ENCODE measurements at regions of chr13 and their contacts with region 1.

Region 1: GRCh38 chr13:75333103-75333502 is 148.9 kb downstream of the TBC1D4 start:
- DNase-seq: no peak
- ATAC-seq: no peak
- H3K4me3 ChIP-seq: no peak overlapping the region
- H3K4me3 Mint-ChIP-seq: no peak overlapping the region
- H3K27ac ChIP-seq: no peak overlapping the region
- H3K27ac Mint-ChIP-seq: no peak overlapping the region
- H3K4me1 ChIP-seq: no peaks in the 10 kb centered on the region
- H3K4me1 Mint-ChIP-seq: peaks cover 0 to 11% (median 4%) of the 10 kb centered on the region in 7 donors
- H3K27me3 ChIP-seq: no peaks in the 10 kb centered on the region
- H3K27me3 Mint-ChIP-seq: no peaks in the 10 kb centered on the region

Region 2: DNA sequence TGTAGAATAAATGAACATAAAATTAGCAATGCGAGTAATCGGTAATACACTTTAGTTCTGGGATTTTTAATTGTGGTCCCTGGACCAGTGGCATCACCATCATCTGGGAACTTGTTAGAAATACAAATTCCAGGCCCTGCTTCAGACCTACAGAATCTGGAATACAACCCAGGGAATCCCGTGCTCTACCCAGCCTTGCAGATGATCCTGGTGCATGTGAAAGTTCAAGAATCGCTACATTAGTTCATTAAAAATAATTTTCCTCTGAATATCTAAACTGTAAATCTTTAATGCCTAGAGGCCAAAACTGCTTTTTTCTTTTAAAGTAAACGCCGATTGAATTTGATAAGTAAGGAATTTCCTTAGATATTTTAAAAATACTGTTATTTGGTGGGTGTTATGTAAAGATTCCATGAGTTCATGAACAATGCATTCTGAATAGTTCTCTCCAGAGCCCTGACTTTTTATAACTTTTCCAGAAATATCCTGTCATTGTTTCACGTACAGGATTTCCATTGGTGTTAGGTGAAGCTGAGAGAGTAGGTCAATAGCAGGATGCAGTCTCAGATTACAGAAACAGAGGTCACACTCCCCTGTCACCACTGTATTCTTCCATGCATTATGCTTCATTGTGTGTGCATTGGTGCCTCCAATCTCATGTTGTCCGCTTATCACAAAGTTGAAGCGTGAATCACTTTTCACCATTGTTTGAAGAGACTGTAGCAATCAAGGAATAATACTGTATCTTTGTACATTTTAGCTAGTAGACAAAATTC is 602.4 kb before region 1 on chr13:
- CTCF ChIA-PET with region 1: no interaction called
- POLR2A ChIA-PET with region 1: no interaction called
- intact Hi-C with region 1: no loop called
- DNase-seq: no peak
- ATAC-seq: no peak
- H3K4me3 ChIP-seq: no peak overlapping the region
- H3K4me3 Mint-ChIP-seq: no peak overlapping the region
- H3K27ac ChIP-seq: no peak overlapping the region
- H3K27ac Mint-ChIP-seq: no peak overlapping the region
- H3K4me1 ChIP-seq: no peaks in the 10 kb centered on the region
- H3K4me1 Mint-ChIP-seq: peaks cover 0 to 5% (median 0%) of the 10 kb centered on the region in 7 donors
- H3K27me3 ChIP-seq: no peaks in the 10 kb centered on the region
- H3K27me3 Mint-ChIP-seq: peaks cover 0 to 15% (median 0%) of the 10 kb centered on the region in 5 donors

Region 3: GRCh38 chr13:75347925-75348324 is 14.8 kb after region 1 on chr13:
- CTCF ChIA-PET with region 1: no interaction called
- POLR2A ChIA-PET with region 1: no interaction called
- intact Hi-C with region 1: loop called in 1 of 2 experiments (anchors 2 kb)
- DNase-seq: no peak
- ATAC-seq: no peak
- H3K4me3 ChIP-seq: no peak overlapping the region
- H3K4me3 Mint-ChIP-seq: no peak overlapping the region
- H3K27ac ChIP-seq: no peak overlapping the region
- H3K27ac Mint-ChIP-seq: no peak overlapping the region
- H3K4me1 ChIP-seq: no peaks in the 10 kb centered on the region
- H3K4me1 Mint-ChIP-seq: peaks cover 0 to 7% (median 0%) of the 10 kb centered on the region in 7 donors
- H3K27me3 ChIP-seq: no peaks in the 10 kb centered on the region
- H3K27me3 Mint-ChIP-seq: no peaks in the 10 kb centered on the region

Measured in naive thymus-derived CD4-positive, alpha-beta T cell (primary cell).